ENCODE measurements at regions of chr9 and their contacts with region 1.

Region 1: DNA sequence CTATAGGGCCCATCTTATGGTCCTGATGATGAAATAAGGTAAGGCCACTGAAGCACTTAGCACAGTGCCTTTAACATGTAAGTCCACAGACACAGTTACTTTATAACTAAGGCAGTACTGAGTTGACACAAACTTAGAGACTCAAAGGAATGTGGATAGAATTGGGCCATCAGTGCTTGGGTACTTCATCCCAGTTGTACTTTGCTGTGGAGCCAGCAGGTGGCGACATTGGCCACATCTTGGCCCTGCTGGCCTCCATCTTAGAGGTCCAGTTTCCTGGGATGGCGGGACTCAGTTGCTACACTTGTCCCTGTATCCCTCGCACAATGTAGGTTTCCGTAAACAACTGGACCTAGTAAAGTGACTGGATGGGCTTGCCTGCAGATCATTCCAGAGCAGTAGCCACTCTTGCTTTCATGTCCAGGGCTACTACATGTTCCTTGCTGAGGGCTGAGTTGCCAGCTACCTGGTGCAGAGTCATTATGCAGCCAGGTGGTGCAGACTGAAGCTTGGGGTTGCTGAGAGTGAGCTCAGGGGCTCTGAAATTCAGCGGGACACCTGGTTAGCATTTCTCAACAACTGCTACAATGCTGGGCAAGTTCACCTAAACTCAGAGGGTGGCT is 10.6 kb downstream of the MTAP start:
- DNase-seq: peak; percentile 79
- H3K4me3 Mint-ChIP-seq: no peak overlapping the region
- H3K27ac Mint-ChIP-seq: no peak overlapping the region
- H3K4me1 Mint-ChIP-seq: peaks cover 49% of the 10 kb centered on the region
- H3K27me3 Mint-ChIP-seq: no peaks in the 10 kb centered on the region

Region 2: GRCh38 chr9:21831961-21832509 is 19.0 kb after region 1 on chr9:
- CTCF ChIA-PET with region 1: interaction called, 5 read pairs
- POLR2A ChIA-PET with region 1: no interaction called
- intact Hi-C with region 1: loop called (anchors 1 kb)
- DNase-seq: peak; percentile 74
- H3K4me3 Mint-ChIP-seq: no peak overlapping the region
- H3K27ac Mint-ChIP-seq: peak overlapping the region; percentile 33
- H3K4me1 Mint-ChIP-seq: peaks cover 66% of the 10 kb centered on the region
- H3K27me3 Mint-ChIP-seq: no peaks in the 10 kb centered on the region

Region 3: GRCh38 chr9:21965401-21965951 is 152.4 kb after region 1 on chr9:
- CTCF ChIA-PET with region 1: interaction called, 10 read pairs
- POLR2A ChIA-PET with region 1: no interaction called
- intact Hi-C with region 1: loop called (anchors 1 kb)
- DNase-seq: peak; percentile 71
- H3K4me3 Mint-ChIP-seq: peak overlapping the region; percentile 54
- H3K27ac Mint-ChIP-seq: no peak overlapping the region
- H3K4me1 Mint-ChIP-seq: peaks cover 22% of the 10 kb centered on the region
- H3K27me3 Mint-ChIP-seq: peaks cover 84% of the 10 kb centered on the region

Region 4: DNA sequence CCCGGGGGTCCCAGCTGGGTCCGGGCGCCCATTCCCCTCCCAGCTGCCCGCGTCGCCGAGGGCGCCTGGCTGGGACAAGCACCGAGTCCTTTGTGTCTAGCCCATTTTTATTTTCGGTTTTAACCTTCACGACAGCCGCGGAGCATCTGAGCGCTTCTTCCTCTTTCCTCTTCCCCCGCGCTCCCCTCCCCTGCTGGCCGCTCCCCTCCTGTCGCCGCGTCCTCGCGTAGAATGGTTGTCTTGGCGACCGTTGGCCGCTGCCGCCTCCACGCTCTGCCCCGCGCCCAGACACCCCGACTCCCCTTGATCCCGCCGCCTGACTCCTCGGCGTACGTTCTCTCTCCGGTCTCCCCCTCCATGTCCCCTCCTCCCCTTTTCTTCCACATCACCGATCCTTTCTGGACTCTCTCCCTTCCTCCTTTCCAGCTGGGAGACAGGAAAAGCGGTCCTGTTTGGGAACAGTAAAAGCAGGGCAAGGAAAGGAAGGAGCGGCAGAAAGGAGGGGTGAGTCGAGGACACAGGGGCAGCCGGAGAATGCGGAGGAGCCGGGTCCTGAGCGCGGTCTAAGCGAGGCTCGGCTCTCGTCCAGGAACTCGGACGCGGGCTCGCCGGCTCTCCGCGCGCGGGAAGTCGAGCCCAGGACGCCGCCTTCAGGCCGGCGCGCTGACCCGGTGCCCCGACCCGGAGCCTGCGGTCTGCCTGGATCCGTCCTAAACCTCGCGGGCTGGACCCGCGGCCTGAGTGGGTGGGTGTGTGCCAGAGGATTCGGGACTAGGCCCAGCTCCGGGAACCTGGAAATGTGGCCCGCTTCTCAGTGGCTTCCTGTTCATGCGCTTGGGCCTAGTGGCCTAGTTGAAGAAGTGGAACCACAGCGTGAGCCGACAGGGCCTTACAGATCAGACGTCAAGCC is 182.4 kb after region 1 on chr9:
- CTCF ChIA-PET with region 1: interaction called, 14 read pairs
- POLR2A ChIA-PET with region 1: no interaction called
- intact Hi-C with region 1: loop called (anchors 1 kb)
- DNase-seq: peak; percentile 87
- H3K4me3 Mint-ChIP-seq: peak overlapping the region; percentile 86
- H3K27ac Mint-ChIP-seq: peak overlapping the region; percentile 44
- H3K4me1 Mint-ChIP-seq: peaks cover 11% of the 10 kb centered on the region
- H3K27me3 Mint-ChIP-seq: peaks cover 16% of the 10 kb centered on the region

Region 5: GRCh38 chr9:22079873-22080341 is 266.9 kb after region 1 on chr9:
- CTCF ChIA-PET with region 1: interaction called, 7 read pairs
- POLR2A ChIA-PET with region 1: interaction called, 3 read pairs
- intact Hi-C with region 1: loop called (anchors 1 kb)
- DNase-seq: peak; percentile 76
- H3K4me3 Mint-ChIP-seq: peak overlapping the region; percentile 24
- H3K27ac Mint-ChIP-seq: peak overlapping the region; percentile 42
- H3K4me1 Mint-ChIP-seq: peaks cover 43% of the 10 kb centered on the region
- H3K27me3 Mint-ChIP-seq: peaks cover 52% of the 10 kb centered on the region

Region 6: GRCh38 chr9:22238809-22239684 is 426.0 kb after region 1 on chr9:
- CTCF ChIA-PET with region 1: interaction called, 45 read pairs
- POLR2A ChIA-PET with region 1: no interaction called
- intact Hi-C with region 1: loop called (anchors 1 kb)
- DNase-seq: no peak
- H3K4me3 Mint-ChIP-seq: no peak overlapping the region
- H3K27ac Mint-ChIP-seq: no peak overlapping the region
- H3K4me1 Mint-ChIP-seq: peaks cover 35% of the 10 kb centered on the region
- H3K27me3 Mint-ChIP-seq: peaks cover 12% of the 10 kb centered on the region